ENCODE measurements at regions of chr2 and their contacts with region 1.

Region 1: GRCh38 chr2:60717691-60718090 is 38.4 kb upstream of the PAPOLG start:
- DNase-seq: no peak
- H3K4me3 ChIP-seq: no peak overlapping the region
- H3K27ac ChIP-seq: no peak overlapping the region
- H3K4me1 ChIP-seq: no peaks in the 10 kb centered on the region
- H3K27me3 ChIP-seq: no peaks in the 10 kb centered on the region
- CTCF ChIP-seq: no peak

Region 2: DNA sequence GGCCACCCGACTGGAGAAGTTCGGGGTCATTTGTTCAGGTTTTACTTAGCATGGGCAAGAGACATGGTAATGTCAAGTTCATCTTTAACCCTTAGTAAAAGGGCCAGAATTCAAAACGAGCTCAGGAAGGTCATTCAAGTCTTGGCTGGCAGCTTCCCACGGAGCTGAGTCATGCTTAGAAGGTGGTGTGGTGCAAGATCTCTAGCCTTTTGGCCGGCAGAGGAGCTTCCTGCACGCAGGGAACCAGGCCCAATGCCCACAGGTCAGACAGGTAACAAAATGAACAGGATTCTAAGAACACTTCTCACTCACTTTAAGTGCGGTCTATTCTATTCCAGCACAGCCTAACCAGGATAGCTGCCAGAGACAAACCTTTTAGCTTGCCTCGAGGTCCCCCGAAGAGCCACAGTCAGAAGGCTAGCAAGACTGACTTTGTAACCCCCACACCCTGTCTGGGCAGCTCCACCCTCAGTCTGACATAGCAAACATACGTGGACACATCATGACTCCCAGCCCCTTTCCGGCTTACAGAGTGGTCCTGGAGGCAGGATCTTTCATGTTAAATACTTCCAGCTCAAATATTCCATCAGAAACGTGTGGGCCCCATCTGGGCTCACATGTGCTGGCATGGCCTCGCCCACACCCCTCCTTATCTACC is 456.9 kb before region 1 on chr2:
- CTCF ChIA-PET with region 1: no interaction called
- POLR2A ChIA-PET with region 1: no interaction called
- intact Hi-C with region 1: no loop called
- DNase-seq: peak in 1 of 2 experiments; percentile 21
- H3K4me3 ChIP-seq: no peak overlapping the region
- H3K27ac ChIP-seq: no peak overlapping the region
- H3K4me1 ChIP-seq: no peaks in the 10 kb centered on the region
- H3K27me3 ChIP-seq: 0 out of 2 replicates have a peak, but pooled peaks cover 3% of the 10 kb centered on the region
- CTCF ChIP-seq: no peak

Region 3: GRCh38 chr2:60987041-60987440 is 269.4 kb after region 1 on chr2:
- CTCF ChIA-PET with region 1: no interaction called
- POLR2A ChIA-PET with region 1: interaction called, 15 read pairs
- intact Hi-C with region 1: no loop called
- DNase-seq: no peak
- H3K4me3 ChIP-seq: no peak overlapping the region
- H3K27ac ChIP-seq: no peak overlapping the region
- H3K4me1 ChIP-seq: peaks cover 11% of the 10 kb centered on the region
- H3K27me3 ChIP-seq: no peaks in the 10 kb centered on the region
- CTCF ChIP-seq: no peak